ENCODE measurements at regions of chr16 and their contacts with region 1.

Region 1: GRCh38 chr16:82263521-82264143 is 93.6 kb upstream of the MPHOSPH6 start:
- DNase-seq: peak; percentile 66
- H3K4me3 ChIP-seq: no peak overlapping the region
- H3K27ac ChIP-seq: no peak overlapping the region
- H3K4me1 ChIP-seq: peaks cover 0 to 5% (median 2%) of the 10 kb centered on the region in 4 donors
- H3K27me3 ChIP-seq: no peaks in the 10 kb centered on the region
- CTCF ChIP-seq: peak; percentile 52 to 88 (median 78)
- EP300 ChIP-seq: no peak
- POLR2A ChIP-seq: no peak

Region 2: DNA sequence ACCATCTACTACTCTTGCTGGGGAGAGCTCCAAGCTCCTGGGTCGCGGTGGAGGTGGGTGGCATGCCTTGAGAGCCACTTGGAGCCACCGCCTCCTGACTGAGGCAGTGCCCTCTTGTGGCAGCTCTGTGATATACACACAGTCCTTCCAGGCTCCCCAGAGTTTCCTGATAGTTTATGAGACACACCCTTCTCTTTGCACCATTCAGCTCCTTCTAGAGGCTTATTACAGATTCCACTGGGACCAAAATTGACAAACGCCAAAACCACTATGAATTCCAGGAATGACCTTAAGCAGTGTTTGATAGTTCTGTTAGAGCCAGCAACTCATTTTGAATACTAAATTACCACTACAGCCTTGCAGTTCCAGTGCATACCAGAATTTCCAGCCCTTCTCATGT is 193.1 kb after region 1 on chr16:
- intact Hi-C with region 1: loop called (anchors 5 kb)
- DNase-seq: no peak
- H3K4me3 ChIP-seq: no peak overlapping the region
- H3K27ac ChIP-seq: no peak overlapping the region
- H3K4me1 ChIP-seq: no peaks in the 10 kb centered on the region
- H3K27me3 ChIP-seq: no peaks in the 10 kb centered on the region
- CTCF ChIP-seq: peak in 3 of 4 experiments; percentile 34 to 59 (median 39)
- EP300 ChIP-seq: no peak
- POLR2A ChIP-seq: no peak

Region 3: GRCh38 chr16:83215406-83216001 is 951.9 kb after region 1 on chr16:
- intact Hi-C with region 1: loop called (anchors 10 kb)
- DNase-seq: no peak
- H3K4me3 ChIP-seq: no peak overlapping the region
- H3K27ac ChIP-seq: no peak overlapping the region
- H3K4me1 ChIP-seq: no peaks in the 10 kb centered on the region
- H3K27me3 ChIP-seq: no peaks in the 10 kb centered on the region
- CTCF ChIP-seq: peak in 3 of 4 experiments; percentile 46 to 70 (median 46)
- EP300 ChIP-seq: no peak
- POLR2A ChIP-seq: no peak

Region 4: GRCh38 chr16:83449861-83450260 is 1186.2 kb after region 1 on chr16:
- intact Hi-C with region 1: loop called (anchors 5 kb)
- DNase-seq: no peak
- H3K4me3 ChIP-seq: no peak overlapping the region
- H3K27ac ChIP-seq: no peak overlapping the region
- H3K4me1 ChIP-seq: no peaks in the 10 kb centered on the region
- H3K27me3 ChIP-seq: no peaks in the 10 kb centered on the region
- CTCF ChIP-seq: no peak
- EP300 ChIP-seq: no peak
- POLR2A ChIP-seq: no peak

Measured in sigmoid colon (tissue), 7 donors.